Activated CD4-positive, alpha-beta T cell treated with anti-CD3 and anti-CD28 coated beads for 36 hours (primary cell): ENCODE measurements at regions of chr11 and their contacts with region 1.

Region 1: DNA sequence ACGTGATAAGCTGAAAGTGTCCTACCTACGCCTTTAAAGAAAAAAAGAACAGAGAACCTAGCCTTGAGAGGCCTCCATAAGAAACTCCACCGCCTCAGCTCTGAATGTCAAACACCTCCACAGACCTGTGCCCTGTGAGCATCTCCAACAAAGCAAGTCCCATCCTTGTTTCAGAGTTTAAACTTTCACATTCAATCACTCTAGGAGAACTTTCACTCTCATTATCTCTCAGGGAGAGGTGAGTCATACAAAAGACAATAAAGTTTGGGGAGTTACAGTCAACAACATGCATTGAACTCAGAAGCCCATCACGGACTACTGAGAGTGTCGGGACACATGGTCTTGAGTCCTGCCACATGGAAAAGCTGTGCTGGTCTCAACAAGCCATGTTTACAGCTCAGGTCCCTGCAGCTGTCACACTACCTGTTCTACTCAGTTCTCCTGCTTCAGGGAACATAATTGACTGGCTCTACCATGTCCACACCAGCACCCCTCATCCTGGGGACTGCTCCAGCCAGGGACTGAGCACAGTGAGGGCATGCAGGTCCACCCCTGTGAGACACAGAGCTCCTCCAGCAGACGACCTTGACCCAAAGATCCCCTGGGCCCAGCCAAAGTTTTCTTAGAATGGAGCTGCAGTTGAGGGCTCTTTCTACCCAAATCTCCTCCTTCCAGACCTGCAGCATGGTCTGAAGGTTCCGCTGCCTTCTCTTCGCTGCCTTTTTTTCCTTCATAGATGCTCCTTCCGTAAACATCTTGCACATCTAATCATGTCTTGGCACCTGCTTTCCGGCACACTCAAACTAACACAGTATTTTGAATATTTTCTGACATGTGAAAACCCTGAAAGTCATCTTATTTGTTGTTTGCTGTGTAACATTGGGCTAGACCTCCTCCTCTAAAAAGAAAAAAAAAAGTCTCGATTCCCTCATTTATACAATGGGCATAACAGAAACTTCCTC is 114.9 kb downstream of the ETS1 start:
- DNase-seq: peak; percentile 83
- ATAC-seq: peak; percentile 67
- H3K4me3 Mint-ChIP-seq: peak overlapping the region; percentile 72
- H3K27ac Mint-ChIP-seq: peak overlapping the region; percentile 99
- H3K4me1 Mint-ChIP-seq: peaks cover 97% of the 10 kb centered on the region
- H3K27me3 Mint-ChIP-seq: no peaks in the 10 kb centered on the region

Region 2: DNA sequence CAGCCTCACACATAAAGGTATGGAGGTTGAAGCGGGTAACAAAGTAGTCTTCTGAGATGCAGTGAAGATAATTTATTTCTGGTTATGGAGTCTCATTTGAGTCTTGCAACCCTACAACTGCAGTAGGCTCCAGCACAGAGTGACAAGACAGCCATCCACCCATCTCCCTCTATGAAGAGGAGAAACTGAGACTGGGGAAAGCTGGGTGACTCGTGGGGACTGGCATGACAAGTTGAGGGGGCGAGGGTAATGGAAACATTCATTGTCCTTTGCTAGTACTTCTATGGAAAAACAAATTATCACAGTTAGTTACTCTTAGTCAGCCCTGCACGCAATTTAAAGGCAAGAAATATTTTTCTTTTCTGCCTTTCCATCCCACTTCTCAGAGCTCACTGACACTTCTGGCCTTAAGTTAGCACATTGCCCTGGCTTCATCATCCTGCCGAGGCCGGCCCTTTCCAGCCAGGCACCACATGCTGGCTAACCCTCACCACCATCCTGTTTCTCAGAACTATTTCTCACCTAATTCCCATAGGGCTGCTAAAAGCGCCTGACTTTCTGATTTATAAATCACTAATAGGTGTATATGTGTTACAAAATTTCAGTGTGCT is 246.2 kb before region 1 on chr11:
- CTCF ChIA-PET with region 1: no interaction called
- POLR2A ChIA-PET with region 1: interaction called, 4 read pairs
- intact Hi-C with region 1: loop called (anchors 5 kb)
- DNase-seq: peak; percentile 62
- ATAC-seq: peak; percentile 54
- H3K4me3 Mint-ChIP-seq: no peak overlapping the region
- H3K27ac Mint-ChIP-seq: peak overlapping the region; percentile 55
- H3K4me1 Mint-ChIP-seq: peaks cover 52% of the 10 kb centered on the region
- H3K27me3 Mint-ChIP-seq: no peaks in the 10 kb centered on the region

Region 3: GRCh38 chr11:128323381-128323780 is 149.0 kb before region 1 on chr11:
- CTCF ChIA-PET with region 1: interaction called, 6 read pairs
- POLR2A ChIA-PET with region 1: interaction called, 4 read pairs
- intact Hi-C with region 1: loop called (anchors 1 to 2 kb)
- DNase-seq: peak; percentile 67
- ATAC-seq: peak; percentile 8
- H3K4me3 Mint-ChIP-seq: peak overlapping the region; percentile 62
- H3K27ac Mint-ChIP-seq: peak overlapping the region; percentile 98
- H3K4me1 Mint-ChIP-seq: peaks cover 91% of the 10 kb centered on the region
- H3K27me3 Mint-ChIP-seq: no peaks in the 10 kb centered on the region

Region 4: DNA sequence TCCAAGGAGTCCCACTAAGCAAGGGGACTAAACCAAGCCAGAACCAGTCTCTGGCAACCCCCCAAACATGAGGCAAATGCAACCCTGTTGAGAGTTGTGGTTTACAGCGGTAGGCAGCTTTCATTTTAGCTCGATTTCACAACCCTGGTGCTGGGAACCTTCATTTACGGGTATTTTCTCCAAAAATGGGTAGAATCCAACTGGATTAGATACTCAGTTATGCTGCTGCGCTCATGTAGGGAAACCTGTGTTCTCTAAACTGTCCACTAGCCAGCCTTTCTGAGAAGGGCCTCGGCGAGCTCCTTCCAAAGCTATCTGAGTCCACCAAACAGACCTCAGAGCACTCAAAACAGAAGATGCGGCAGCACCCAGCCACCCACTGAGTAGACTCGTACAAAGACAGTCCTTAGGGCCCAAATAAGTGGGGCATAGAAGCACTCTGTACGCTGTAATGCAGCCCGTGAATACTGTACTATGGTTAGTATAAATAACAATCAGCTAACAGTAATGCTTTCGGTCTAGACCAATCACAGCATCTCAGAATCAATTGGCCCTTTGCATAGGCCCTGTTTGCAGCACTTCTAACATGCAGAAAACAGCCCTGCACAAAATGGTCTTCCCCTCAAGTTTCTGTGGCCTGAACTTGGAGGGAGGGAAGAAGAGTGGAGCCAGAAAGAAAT is 10.2 kb after region 1 on chr11:
- CTCF ChIA-PET with region 1: interaction called, 41 read pairs
- POLR2A ChIA-PET with region 1: interaction called, 42 read pairs
- intact Hi-C with region 1: loop called (anchors 1 kb)
- DNase-seq: peak; percentile 75
- ATAC-seq: peak; percentile 71
- H3K4me3 Mint-ChIP-seq: peak overlapping the region; percentile 63
- H3K27ac Mint-ChIP-seq: peak overlapping the region; percentile 98
- H3K4me1 Mint-ChIP-seq: peaks cover 96% of the 10 kb centered on the region
- H3K27me3 Mint-ChIP-seq: no peaks in the 10 kb centered on the region

Region 5: GRCh38 chr11:128506999-128507611 is 34.7 kb after region 1 on chr11:
- CTCF ChIA-PET with region 1: interaction called, 10 read pairs
- POLR2A ChIA-PET with region 1: interaction called, 19 read pairs
- intact Hi-C with region 1: loop called (anchors 5 kb)
- DNase-seq: peak; percentile 80
- ATAC-seq: peak; percentile 58
- H3K4me3 Mint-ChIP-seq: peak overlapping the region; percentile 96
- H3K27ac Mint-ChIP-seq: peak overlapping the region; percentile 98
- H3K4me1 Mint-ChIP-seq: peaks cover 89% of the 10 kb centered on the region
- H3K27me3 Mint-ChIP-seq: no peaks in the 10 kb centered on the region

Region 6: DNA sequence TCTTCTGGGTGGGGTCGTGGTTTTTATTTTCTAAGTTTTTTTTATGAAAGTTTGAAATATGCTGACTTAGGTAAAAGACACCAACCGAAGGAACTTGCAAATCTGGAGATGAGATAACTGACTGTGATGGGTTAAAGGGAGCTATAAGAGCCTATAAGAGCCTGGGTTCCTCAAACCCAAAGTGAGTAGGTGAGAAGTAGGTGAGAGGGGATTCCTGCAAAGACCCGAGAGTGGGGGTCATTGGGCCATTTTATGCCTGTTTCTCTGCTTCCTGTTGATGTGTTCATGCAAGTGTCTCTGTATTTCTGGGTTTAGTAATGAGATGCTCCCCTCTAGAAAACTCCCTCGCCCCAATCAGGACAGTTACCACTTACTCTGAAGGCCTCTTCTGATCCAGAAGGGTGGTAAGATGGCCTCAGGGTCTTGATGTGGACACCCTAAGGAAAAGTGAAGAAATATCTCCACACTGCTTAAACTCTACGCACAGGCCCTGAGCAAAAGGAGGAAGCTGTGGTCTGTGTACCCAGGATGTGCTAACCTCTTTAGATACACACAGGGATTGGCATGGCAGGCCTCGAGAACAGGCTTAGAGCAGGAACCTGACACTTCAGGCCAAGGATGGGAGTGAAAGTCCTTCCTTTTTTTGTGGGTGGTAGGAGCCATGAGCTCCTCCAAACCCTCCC is 223.3 kb after region 1 on chr11:
- CTCF ChIA-PET with region 1: no interaction called
- POLR2A ChIA-PET with region 1: no interaction called
- intact Hi-C with region 1: loop called in 1 of 2 experiments (anchors 5 kb)
- DNase-seq: peak; percentile 49
- ATAC-seq: peak; percentile 24
- H3K4me3 Mint-ChIP-seq: peak overlapping the region; percentile 90
- H3K27ac Mint-ChIP-seq: peak overlapping the region; percentile 94
- H3K4me1 Mint-ChIP-seq: peaks cover 58% of the 10 kb centered on the region
- H3K27me3 Mint-ChIP-seq: peaks cover 9% of the 10 kb centered on the region